WTC11 (cell line): ENCODE measurements at regions of chr10 and their contacts with region 1.

Region 1: GRCh38 chr10:44932517-44933450 is 21.6 kb downstream of the TMEM72 start:
- DNase-seq: peak; percentile 96
- ATAC-seq: peak; percentile 98
- H3K4me3 Mint-ChIP-seq: no peak overlapping the region
- H3K27ac Mint-ChIP-seq: no peak overlapping the region
- H3K4me1 Mint-ChIP-seq: peaks cover 4% of the 10 kb centered on the region
- H3K27me3 Mint-ChIP-seq: peaks cover 14% of the 10 kb centered on the region
- CTCF ChIP-seq: peak; percentile 93

Region 2: GRCh38 chr10:44878706-44879530 is 53.9 kb before region 1 on chr10:
- CTCF ChIA-PET with region 1: interaction called, 16 read pairs
- POLR2A ChIA-PET with region 1: no interaction called
- DNase-seq: peak; percentile 91
- ATAC-seq: peak; percentile 93
- H3K4me3 Mint-ChIP-seq: peak overlapping the region; percentile 72
- H3K27ac Mint-ChIP-seq: peak overlapping the region; percentile 94; the same call in 1 of the 2 replicates
- H3K4me1 Mint-ChIP-seq: peaks cover 26% of the 10 kb centered on the region
- H3K27me3 Mint-ChIP-seq: peaks cover 23% of the 10 kb centered on the region
- CTCF ChIP-seq: no peak

Region 3: DNA sequence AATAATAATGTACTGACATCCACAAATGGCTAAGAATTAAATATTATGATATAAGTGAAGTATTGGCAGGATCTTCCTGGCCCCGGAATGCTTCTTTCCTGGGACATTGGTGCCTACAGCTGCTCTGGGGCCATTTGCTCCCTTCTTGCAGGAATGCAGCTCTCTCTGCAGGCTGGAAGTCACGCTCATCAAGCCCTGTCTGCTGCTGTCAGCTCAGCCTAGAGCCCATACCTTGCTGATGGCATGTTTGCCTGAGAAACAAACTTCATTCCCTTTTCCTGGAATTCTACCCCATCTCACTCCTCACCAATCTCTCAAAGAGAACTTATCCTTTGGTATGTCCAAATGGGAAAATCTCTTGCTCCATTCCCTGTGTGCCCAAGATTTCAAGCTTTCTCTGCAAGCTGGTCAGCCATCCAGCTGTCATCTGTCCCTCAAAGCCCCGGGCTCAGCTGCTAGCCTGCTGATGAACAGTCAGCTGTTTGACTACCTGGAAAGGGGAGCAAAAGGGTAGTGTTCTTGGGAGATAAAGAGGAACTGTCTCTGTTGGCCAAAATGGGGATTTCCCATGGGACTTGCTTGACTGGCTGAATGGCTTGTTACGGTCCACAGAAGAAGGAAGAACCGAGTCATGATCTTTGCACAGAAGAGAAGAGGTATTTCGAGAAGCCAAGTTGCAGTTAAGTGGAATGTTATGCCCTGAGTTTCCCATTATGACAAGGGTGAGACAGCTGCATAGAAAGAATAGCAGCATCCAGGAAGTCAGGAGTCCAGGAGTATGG is 14.8 kb after region 1 on chr10:
- CTCF ChIA-PET with region 1: interaction called, 22 read pairs
- POLR2A ChIA-PET with region 1: interaction called, 3 read pairs
- DNase-seq: no peak
- ATAC-seq: no peak
- H3K4me3 Mint-ChIP-seq: no peak overlapping the region
- H3K27ac Mint-ChIP-seq: no peak overlapping the region
- H3K4me1 Mint-ChIP-seq: peaks cover 15% of the 10 kb centered on the region
- H3K27me3 Mint-ChIP-seq: no peaks in the 10 kb centered on the region
- CTCF ChIP-seq: no peak

Region 4: GRCh38 chr10:44959247-44960087 is 26.7 kb after region 1 on chr10 and contains the start of gene RASSF4:
- CTCF ChIA-PET with region 1: interaction called, 74 read pairs
- POLR2A ChIA-PET with region 1: no interaction called
- DNase-seq: peak; percentile 94
- ATAC-seq: peak; percentile 97
- H3K4me3 Mint-ChIP-seq: peak within 1 kb of the TSS; percentile 81
- H3K27ac Mint-ChIP-seq: no peak within 1 kb of the TSS; the same call in 1 of the 2 replicates
- H3K4me1 Mint-ChIP-seq: peaks cover 56% of the 10 kb centered on the region
- H3K27me3 Mint-ChIP-seq: peaks cover 10% of the 10 kb centered on the region
- CTCF ChIP-seq: no peak
- total RNA-seq, gene RASSF4: 15.7 to 16.7 TPM (median 16.2 TPM) in 3 replicates

Region 5: DNA sequence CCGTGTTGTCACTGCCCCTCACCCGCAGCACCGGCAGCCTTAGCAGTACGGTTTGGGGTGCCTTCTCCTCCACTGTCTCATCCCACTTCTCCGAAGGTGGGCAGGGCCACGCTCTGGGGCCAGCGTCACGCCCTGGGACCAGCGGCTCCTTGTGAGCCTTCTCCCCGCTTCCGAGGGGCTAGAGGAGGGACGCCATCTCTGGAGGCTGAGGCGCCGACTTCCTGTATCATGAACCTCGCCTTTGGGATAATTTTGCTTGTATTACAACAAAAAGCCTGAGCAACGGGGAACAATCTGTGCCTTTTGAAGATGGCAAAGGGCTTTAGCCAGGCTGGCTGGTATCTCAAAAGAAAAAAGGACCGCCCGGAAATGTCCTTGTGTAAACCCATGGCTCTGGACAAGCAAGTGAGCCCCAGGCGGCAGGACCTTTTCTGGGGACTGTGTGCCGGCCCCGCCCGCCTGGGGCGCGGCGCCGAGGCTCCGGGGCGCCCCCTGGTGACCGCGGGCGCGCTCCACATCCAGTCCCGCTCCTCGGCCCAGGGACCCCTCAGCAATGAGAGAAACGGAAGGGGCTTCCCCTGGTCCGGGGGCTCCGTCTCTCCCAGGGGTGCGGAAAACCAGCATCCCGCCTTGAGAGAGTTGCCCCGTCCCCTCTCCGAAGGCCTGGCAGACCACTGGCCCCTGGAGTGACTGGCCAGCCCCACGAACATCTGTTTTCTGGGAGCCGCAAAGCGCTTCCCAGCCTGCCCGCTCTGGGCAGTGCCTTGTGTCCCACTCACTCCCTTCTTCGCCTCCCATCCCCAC is 42.0 kb after region 1 on chr10:
- CTCF ChIA-PET with region 1: interaction called, 40 read pairs
- POLR2A ChIA-PET with region 1: interaction called, 3 read pairs
- DNase-seq: peak; percentile 57
- ATAC-seq: peak; percentile 66
- H3K4me3 Mint-ChIP-seq: peak overlapping the region; percentile 61
- H3K27ac Mint-ChIP-seq: no peak overlapping the region
- H3K4me1 Mint-ChIP-seq: peaks cover 57% of the 10 kb centered on the region
- H3K27me3 Mint-ChIP-seq: peaks cover 12% of the 10 kb centered on the region
- CTCF ChIP-seq: peak; percentile 87

Region 6: GRCh38 chr10:44990302-44990655 is 57.5 kb after region 1 on chr10:
- CTCF ChIA-PET with region 1: interaction called, 143 read pairs
- POLR2A ChIA-PET with region 1: interaction called, 8 read pairs
- DNase-seq: peak; percentile 62
- ATAC-seq: peak; percentile 88
- H3K4me3 Mint-ChIP-seq: no peak overlapping the region
- H3K27ac Mint-ChIP-seq: peak overlapping the region; percentile 82
- H3K4me1 Mint-ChIP-seq: peaks cover 75% of the 10 kb centered on the region
- H3K27me3 Mint-ChIP-seq: no peaks in the 10 kb centered on the region; the same call in 1 of the 2 replicates
- CTCF ChIP-seq: no peak

Region 7: GRCh38 chr10:45034301-45034700 is 101.5 kb after region 1 on chr10:
- CTCF ChIA-PET with region 1: no interaction called
- POLR2A ChIA-PET with region 1: no interaction called
- DNase-seq: no peak
- ATAC-seq: no peak
- H3K4me3 Mint-ChIP-seq: no peak overlapping the region
- H3K27ac Mint-ChIP-seq: no peak overlapping the region
- H3K4me1 Mint-ChIP-seq: no peaks in the 10 kb centered on the region
- H3K27me3 Mint-ChIP-seq: no peaks in the 10 kb centered on the region; the same call in 1 of the 2 replicates
- CTCF ChIP-seq: no peak